IMR-90 (cell line): ENCODE measurements at regions of chr16 and their contacts with region 1.

Region 1: GRCh38 chr16:58661199-58661830 is 23.3 kb downstream of the SLC38A7 start:
- DNase-seq: peak; percentile 91
- ATAC-seq: peak; percentile 97
- H3K4me3 ChIP-seq: no peak overlapping the region
- H3K27ac ChIP-seq: no peak overlapping the region
- H3K4me1 ChIP-seq: no peaks in the 10 kb centered on the region
- H3K27me3 ChIP-seq: no peaks in the 10 kb centered on the region
- CTCF ChIP-seq: peak; percentile 87
- POLR2A ChIP-seq: no peak
- RAD21 ChIP-seq: peak; percentile 91

Region 2: GRCh38 chr16:58070585-58070984 is 590.7 kb before region 1 on chr16:
- CTCF ChIA-PET with region 1: no interaction called
- POLR2A ChIA-PET with region 1: no interaction called
- dilution Hi-C with region 1: no loop called
- in situ Hi-C with region 1: no loop called
- intact Hi-C with region 1: loop called (anchors 5 kb)
- DNase-seq: no peak
- ATAC-seq: no peak
- H3K4me3 ChIP-seq: no peak overlapping the region
- H3K27ac ChIP-seq: no peak overlapping the region
- H3K4me1 ChIP-seq: no peaks in the 10 kb centered on the region
- H3K27me3 ChIP-seq: no peaks in the 10 kb centered on the region; the same call in 1 of the 2 replicates
- CTCF ChIP-seq: no peak
- POLR2A ChIP-seq: no peak
- RAD21 ChIP-seq: no peak

Region 3: GRCh38 chr16:58487566-58488351 is 173.6 kb before region 1 on chr16:
- CTCF ChIA-PET with region 1: no interaction called
- POLR2A ChIA-PET with region 1: no interaction called
- dilution Hi-C with region 1: no loop called
- in situ Hi-C with region 1: no loop called
- intact Hi-C with region 1: no loop called
- DNase-seq: peak; percentile 67
- ATAC-seq: peak; percentile 99
- H3K4me3 ChIP-seq: no peak overlapping the region
- H3K27ac ChIP-seq: no peak overlapping the region
- H3K4me1 ChIP-seq: no peaks in the 10 kb centered on the region
- H3K27me3 ChIP-seq: peaks cover 10% of the 10 kb centered on the region
- CTCF ChIP-seq: peak; percentile 89
- POLR2A ChIP-seq: no peak
- RAD21 ChIP-seq: peak; percentile 89

Region 4: GRCh38 chr16:58629572-58630104 is 31.7 kb before region 1 on chr16 and contains the start of gene CNOT1:
- CTCF ChIA-PET with region 1: interaction called, 3 read pairs
- POLR2A ChIA-PET with region 1: no interaction called
- dilution Hi-C with region 1: no loop called
- in situ Hi-C with region 1: no loop called
- intact Hi-C with region 1: loop called (anchors 1 kb)
- DNase-seq: peak; percentile 100
- ATAC-seq: peak; percentile 92
- H3K4me3 ChIP-seq: peak within 1 kb of the TSS; percentile 82
- H3K27ac ChIP-seq: peak within 1 kb of the TSS; percentile 90
- H3K4me1 ChIP-seq: no peaks in the 10 kb centered on the region
- H3K27me3 ChIP-seq: no peaks in the 10 kb centered on the region
- CTCF ChIP-seq: no peak
- POLR2A ChIP-seq: peak; percentile 93
- RAD21 ChIP-seq: no peak
- total RNA-seq, gene CNOT1: 203 and 357 TPM in 2 replicates

Region 5: GRCh38 chr16:58741166-58741565 is 79.9 kb after region 1 on chr16:
- CTCF ChIA-PET with region 1: no interaction called
- POLR2A ChIA-PET with region 1: no interaction called
- dilution Hi-C with region 1: no loop called
- in situ Hi-C with region 1: no loop called
- intact Hi-C with region 1: no loop called
- DNase-seq: no peak
- ATAC-seq: no peak
- H3K4me3 ChIP-seq: no peak overlapping the region
- H3K27ac ChIP-seq: no peak overlapping the region
- H3K4me1 ChIP-seq: no peaks in the 10 kb centered on the region
- H3K27me3 ChIP-seq: peaks cover 3% of the 10 kb centered on the region; the same call in 1 of the 2 replicates
- CTCF ChIP-seq: no peak
- POLR2A ChIP-seq: no peak
- RAD21 ChIP-seq: no peak